ENCODE measurements at regions of chr2 and their contacts with region 1.

Region 1: DNA sequence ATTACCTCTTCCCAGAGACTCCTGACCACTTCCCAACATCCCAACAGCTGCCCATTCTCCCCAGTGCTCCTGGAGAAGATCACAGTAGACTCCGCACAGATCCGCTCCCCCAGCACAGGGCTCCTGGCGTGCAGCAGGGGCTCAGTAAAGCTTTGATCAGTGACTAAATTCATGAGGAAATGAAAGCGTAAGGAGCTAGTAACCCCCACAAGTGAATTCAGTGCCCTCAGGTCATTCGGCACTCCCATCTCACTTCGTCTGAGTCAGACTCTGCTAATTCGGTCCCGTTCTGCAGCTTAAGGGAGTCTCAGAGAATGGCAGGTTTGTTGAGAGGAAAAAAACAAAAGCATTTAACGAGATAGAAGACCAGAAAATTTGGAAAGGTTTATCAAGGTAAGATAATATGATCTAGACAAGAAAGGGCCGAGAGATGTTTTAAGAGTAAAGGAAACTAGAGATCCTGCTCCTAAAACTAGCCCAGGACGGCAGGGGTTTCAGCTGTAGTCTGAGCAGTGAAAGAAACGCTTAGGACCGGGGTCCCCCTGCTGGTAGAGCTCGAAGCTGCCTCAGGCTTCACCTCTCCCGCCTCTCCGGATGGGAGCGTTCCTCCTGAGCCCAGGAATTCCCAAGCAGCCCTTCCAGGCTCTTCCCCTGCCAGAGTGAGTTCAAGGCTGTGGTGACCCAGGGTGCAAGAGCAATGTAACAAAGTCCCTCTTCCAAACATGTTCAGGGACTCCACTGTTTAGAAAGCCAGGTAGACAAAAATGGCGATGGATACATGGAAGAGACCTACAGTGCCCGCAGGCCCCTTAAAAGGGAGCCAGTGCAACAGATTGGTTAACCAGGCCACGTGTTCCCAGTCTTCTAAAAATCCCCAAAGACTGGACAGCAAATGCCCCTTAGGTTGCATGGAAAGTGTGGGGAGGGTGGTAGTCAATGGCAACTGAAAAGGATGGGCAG is 127.3 kb downstream of the DNER start:
- DNase-seq: peak; percentile 47 to 83
- ATAC-seq: peak; percentile 92

Region 2: GRCh38 chr2:229431327-229431954 is 155.6 kb before region 1 on chr2:
- intact Hi-C with region 1: loop called in 1 of 2 experiments (anchors 5 kb)
- DNase-seq: no peak
- ATAC-seq: no peak

Region 3: GRCh38 chr2:229530434-229530833 is 56.6 kb before region 1 on chr2:
- intact Hi-C with region 1: no loop called
- DNase-seq: no peak
- ATAC-seq: no peak